Mammary epithelial cell (primary cell): ENCODE measurements at regions of chrX and their contacts with region 1.

Region 1: GRCh38 chrX:54473993-54474859 is 21.8 kb downstream of the FGD1 start:
- DNase-seq: peak; percentile 76
- H3K4me3 ChIP-seq: peak overlapping the region; percentile 44 to 55 (median 47)
- H3K27ac ChIP-seq: peak overlapping the region; percentile 48
- H3K4me1 ChIP-seq: peaks cover 7% of the 10 kb centered on the region
- H3K27me3 ChIP-seq: no peaks in the 10 kb centered on the region
- CTCF ChIP-seq: no peak

Region 2: DNA sequence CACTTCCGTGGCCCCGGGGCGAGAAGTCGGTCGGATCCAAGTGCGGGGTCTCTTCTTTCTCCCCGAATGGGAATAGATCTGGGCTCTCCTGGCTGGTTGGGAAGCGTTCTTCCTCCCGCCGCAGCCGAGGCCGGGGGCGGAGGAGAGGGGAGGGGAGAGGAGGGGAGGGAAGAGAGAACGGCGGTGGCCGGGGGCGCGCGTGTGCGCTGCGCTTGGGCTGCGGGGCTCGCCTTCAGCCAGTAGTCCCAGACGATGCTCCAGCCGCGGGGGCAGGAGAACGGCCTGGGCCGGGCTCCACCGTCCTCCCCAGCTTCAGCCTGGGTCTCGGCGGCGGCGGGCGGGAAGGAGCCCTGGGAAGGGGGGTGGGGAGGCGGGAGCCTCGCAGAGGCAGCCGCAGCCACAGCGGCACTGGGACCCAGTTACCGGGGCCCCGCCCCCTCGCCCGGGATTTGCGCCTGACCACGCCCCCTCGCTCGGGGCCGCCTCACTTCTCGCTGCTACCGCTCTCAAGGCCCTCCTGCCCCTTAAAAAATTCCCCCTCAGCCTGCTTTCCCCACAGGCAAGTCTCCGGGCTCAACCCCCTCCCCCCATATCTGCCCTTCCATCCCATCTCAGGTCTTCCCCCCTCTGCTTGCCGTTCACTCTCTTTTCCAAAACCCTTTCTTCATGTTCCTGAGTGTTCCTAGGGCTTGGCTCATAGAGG is 21.7 kb after region 1 on chrX and contains the start of gene FGD1:
- CTCF ChIA-PET with region 1: no interaction called
- dilution Hi-C with region 1: no loop called
- in situ Hi-C with region 1: no loop called
- intact Hi-C with region 1: loop called (anchors 1 kb)
- DNase-seq: peak; percentile 37
- H3K4me3 ChIP-seq: peak within 1 kb of the TSS; percentile 54 to 65 (median 64)
- H3K27ac ChIP-seq: peak within 1 kb of the TSS; percentile 23
- H3K4me1 ChIP-seq: peaks cover 4% of the 10 kb centered on the region
- H3K27me3 ChIP-seq: no peaks in the 10 kb centered on the region
- CTCF ChIP-seq: no peak
- total RNA-seq, gene FGD1: 5.5 to 16.0 TPM